ENCODE measurements at regions of chr10 and their contacts with region 1.

Region 1: DNA sequence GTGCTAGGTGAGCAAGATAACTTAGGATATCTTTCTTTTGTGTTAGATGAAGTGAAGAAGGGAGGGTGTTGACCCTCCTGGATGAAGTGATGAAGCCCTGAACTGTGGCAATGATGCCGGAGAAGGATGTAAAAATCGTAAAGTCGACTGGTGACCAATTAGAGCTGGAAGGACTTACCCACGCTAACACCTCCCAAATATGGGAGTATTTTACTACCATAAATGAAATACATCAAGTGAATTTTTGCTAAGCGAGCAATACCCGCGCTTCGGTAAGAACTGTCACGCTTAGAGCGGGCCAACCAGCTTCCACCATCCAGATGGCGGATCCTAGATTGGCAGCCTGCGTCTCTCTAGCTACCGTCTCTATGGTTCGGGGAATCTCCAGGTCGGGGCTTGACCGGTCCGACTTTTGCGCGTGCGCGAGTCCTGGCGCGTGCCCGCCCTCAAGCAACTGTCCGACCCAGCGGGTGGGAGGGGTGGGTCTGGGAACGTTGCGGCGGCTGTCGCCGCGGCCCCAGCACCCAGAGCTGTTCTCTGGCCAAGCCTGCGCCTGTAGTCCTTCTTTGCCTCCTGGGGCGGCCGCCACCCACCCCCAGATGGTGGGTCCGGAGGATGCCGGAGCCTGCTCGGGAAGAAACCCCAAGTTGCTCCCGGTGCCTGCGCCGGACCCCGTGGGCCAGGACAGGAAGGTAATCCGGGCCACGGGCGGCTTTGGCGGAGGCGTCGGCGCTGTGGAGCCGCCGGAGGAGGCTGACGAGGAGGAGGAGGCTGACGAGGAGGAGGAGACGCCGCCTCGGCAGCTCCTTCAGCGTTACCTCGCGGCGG is at the start of gene TBC1D12:
- DNase-seq: peak; percentile 98
- H3K4me3 ChIP-seq: peak within 1 kb of the TSS; percentile 61 to 91 (median 81)
- H3K27ac ChIP-seq: peak within 1 kb of the TSS; percentile 85 to 98 (median 96)
- H3K4me1 ChIP-seq: peaks cover 0 to 19% (median 14%) of the 10 kb centered on the region in 4 donors
- H3K27me3 ChIP-seq: no peaks in the 10 kb centered on the region
- CTCF ChIP-seq: no peak
- EP300 ChIP-seq: no peak
- POLR2A ChIP-seq: peak; percentile 38 to 64
- total RNA-seq, gene TBC1D12: 16.3 to 24.4 (median 19.1) TPM

Region 2: DNA sequence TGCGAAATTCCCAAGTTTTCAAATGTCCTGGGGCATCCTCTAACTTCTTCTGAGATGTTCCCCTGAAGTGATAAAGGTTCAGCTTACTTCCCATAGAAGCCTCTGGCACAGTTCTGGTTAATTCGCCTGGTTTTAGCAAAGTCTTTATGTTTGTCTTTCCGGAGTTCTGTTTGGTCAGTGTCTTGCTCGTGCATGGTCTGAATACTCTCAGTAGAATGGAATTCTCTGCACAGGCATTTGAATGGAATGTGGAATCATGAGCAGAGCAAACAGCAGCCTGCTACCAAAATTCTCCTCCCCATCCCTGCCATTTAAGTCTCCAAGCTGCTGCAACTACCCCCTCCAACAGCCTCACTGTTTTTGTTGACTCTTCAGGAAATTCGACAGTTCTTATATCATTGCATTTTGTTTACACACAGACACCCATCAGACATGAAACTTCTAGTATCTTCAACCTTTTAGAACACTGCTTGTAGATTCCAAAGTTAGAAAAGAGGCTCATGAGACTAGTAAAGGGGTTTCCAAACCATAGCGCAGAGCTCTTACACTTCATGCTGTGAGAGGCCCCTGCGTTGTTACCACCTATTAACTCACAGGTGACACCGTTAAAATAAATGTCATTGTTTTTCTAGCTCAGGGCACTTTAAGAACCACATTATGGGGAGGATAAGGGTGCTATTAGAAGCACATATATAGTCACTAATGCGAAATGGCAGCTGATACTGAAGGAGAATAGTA is 278.8 kb before region 1 on chr10:
- intact Hi-C with region 1: no loop called
- DNase-seq: no peak
- H3K4me3 ChIP-seq: no peak overlapping the region
- H3K27ac ChIP-seq: peak overlapping the region in 3 of 4 donors; percentile 23 to 60 (median 53)
- H3K4me1 ChIP-seq: peaks cover 0 to 40% (median 32%) of the 10 kb centered on the region in 4 donors
- H3K27me3 ChIP-seq: no peaks in the 10 kb centered on the region
- CTCF ChIP-seq: no peak
- EP300 ChIP-seq: no peak
- POLR2A ChIP-seq: no peak

Region 3: DNA sequence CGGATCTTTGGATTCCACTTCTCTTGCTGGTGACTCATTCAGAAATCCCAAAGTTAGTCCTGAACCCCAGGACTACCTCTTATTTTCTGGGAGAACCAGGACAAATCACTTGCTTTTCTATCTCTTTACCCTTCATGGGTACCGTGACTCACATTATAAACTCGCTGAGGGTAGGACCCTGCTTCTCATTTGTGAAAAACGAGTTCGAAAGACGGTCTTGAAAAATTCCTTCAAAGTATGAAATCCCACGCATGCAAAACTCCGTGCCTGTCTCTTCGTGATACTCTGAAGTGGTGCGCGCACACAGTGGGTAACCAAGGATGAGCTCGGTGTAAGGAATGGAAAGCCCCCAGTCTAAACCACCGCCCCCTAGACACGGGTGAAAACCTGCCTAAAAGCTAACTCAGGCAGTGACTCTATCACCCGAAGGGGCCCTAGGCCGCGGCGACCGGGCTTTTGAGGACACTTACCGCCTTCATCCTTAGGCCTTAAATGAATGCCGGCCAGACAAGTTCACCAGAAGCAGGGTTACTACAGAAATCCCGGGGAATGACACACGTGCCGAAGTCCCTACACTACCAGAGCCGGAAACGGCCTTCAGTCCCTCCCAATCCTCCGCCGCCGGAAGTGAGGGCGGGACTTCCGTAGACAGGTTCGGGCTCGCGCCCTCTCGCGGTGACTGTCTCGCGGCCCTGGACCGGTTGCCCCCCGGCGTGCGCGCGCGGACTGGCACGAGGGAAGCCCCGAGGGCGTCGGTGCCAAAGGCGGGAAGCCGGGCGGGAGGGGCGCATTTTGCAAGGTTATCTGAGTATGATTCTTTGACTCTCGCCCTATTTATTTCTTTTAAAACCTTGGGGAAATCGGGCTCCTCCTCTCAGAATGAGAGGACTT is 39.6 kb before region 1 on chr10 and contains the start of gene NOC3L:
- intact Hi-C with region 1: loop called (anchors 2 kb)
- DNase-seq: peak; percentile 97
- H3K4me3 ChIP-seq: peak within 1 kb of the TSS; percentile 57 to 74 (median 65)
- H3K27ac ChIP-seq: peak within 1 kb of the TSS; percentile 75 to 83 (median 76)
- H3K4me1 ChIP-seq: peaks cover 0 to 23% (median 16%) of the 10 kb centered on the region in 4 donors
- H3K27me3 ChIP-seq: no peaks in the 10 kb centered on the region
- CTCF ChIP-seq: peak; percentile 68 to 87 (median 81)
- EP300 ChIP-seq: no peak
- POLR2A ChIP-seq: no peak
- total RNA-seq, gene NOC3L: 14.1 to 17.8 (median 15.9) TPM